ENCODE measurements at regions of chr1 and their contacts with region 1.

Region 1: DNA sequence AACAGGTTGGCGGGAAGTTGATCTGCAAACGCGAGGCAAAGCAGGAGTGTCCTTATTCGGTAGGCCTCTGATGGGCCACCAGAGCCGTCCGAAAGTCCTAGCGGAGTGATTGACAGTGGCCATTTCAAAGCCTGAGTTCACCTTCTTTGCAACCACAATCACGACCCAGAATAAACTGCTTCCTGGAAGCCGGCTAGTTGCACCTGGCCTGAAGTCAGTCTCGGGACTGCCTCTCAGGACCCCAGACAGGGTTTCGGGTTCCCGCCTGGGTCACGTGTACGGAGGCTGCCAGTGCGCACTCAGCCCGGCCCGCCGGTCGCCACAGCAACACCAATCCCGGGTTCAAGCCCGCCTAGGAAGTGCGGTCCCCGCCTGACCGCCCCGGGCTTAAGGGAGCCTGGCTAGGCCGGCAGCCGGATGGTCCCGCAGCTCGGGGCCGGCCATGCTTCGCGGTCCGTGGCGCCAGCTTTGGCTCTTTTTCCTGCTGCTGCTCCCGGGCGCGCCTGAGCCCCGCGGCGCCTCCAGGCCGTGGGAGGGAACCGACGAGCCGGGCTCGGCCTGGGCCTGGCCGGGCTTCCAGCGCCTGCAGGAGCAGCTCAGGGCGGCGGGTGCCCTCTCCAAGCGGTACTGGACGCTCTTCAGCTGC is at the start of gene TOR3A:
- DNase-seq: peak; percentile 87
- ATAC-seq: peak; percentile 78
- H3K4me3 Mint-ChIP-seq: peak within 1 kb of the TSS; percentile 94
- H3K27ac Mint-ChIP-seq: peak within 1 kb of the TSS; percentile 94
- H3K4me1 Mint-ChIP-seq: peaks cover 24% of the 10 kb centered on the region
- H3K27me3 Mint-ChIP-seq: no peaks in the 10 kb centered on the region
- total RNA-seq, gene TOR3A: 29.4 TPM

Region 2: DNA sequence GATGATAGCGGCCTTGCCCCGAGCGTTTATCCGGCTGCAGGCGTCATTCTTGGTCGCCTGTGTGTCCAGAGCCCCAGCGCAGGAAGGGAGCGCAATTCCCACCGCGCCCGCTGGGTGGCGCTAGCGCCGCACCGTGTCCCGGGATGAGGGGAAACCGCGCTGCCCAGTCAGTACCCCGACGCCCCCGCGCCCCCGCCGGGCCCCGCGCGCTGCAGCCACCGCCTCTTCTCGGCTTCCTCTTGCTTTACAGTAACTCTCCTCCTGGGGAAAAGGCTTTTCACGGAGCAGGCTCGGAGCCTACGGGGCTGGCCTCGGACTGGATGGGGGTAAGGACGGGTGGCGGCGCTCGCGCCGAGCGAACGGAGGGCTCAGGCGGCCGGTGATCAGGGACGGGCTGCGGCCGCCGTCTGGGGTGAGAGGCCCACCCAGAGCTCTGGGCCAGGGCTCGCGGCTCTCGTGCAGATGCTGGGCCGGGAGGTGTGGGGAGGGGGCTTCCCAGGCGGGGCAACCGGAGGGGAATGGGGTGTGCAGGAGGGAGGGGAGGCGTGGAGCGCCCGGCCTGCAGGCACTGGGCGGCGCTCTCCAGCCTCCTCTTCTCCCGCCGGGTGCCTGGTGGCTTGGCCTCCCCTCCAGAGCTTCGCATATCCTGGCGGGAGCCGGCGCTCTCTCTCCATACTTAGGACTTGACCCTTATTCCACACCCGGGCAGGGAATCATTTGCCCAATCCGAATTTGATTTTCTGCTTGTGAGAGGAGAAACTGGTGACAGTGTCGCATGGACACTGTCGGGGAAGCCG is 539.1 kb before region 1 on chr1:
- CTCF ChIA-PET with region 1: no interaction called
- POLR2A ChIA-PET with region 1: no interaction called
- intact Hi-C with region 1: loop called in 1 of 2 experiments (anchors 5 kb)
- DNase-seq: peak; percentile 93
- ATAC-seq: peak; percentile 88
- H3K4me3 Mint-ChIP-seq: peak overlapping the region; percentile 84
- H3K27ac Mint-ChIP-seq: peak overlapping the region; percentile 85
- H3K4me1 Mint-ChIP-seq: peaks cover 2% of the 10 kb centered on the region
- H3K27me3 Mint-ChIP-seq: no peaks in the 10 kb centered on the region

Region 3: DNA sequence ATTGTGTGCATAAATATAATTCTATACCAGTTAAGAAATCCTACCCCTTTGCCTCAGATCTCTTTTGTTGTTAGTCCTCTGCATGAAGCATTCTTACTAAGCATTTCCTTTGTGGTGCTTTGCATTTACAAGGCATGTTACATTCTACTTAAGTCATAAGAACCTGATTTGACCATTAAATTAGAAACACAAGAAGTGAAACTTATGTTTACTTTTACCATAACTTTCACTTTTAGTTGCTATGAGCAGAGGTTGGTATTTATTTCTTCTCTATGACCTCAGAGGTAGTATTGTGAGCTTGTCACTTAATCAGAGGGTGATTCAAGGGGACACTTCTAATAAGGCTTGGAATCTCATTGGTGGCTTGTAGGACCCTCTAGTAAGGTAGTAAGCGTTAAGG is 47.1 kb before region 1 on chr1:
- CTCF ChIA-PET with region 1: interaction called, 4 read pairs
- POLR2A ChIA-PET with region 1: interaction called, 5 read pairs
- intact Hi-C with region 1: loop called (anchors 1 to 2 kb)
- DNase-seq: no peak
- ATAC-seq: peak; percentile 80
- H3K4me3 Mint-ChIP-seq: no peak overlapping the region
- H3K27ac Mint-ChIP-seq: peak overlapping the region; percentile 84
- H3K4me1 Mint-ChIP-seq: peaks cover 85% of the 10 kb centered on the region
- H3K27me3 Mint-ChIP-seq: no peaks in the 10 kb centered on the region

Region 4: GRCh38 chr1:179055937-179056336 is 25.9 kb before region 1 on chr1:
- CTCF ChIA-PET with region 1: no interaction called
- POLR2A ChIA-PET with region 1: no interaction called
- intact Hi-C with region 1: no loop called
- DNase-seq: no peak
- ATAC-seq: no peak
- H3K4me3 Mint-ChIP-seq: no peak overlapping the region
- H3K27ac Mint-ChIP-seq: no peak overlapping the region
- H3K4me1 Mint-ChIP-seq: no peaks in the 10 kb centered on the region
- H3K27me3 Mint-ChIP-seq: no peaks in the 10 kb centered on the region

Region 5: GRCh38 chr1:179190861-179191260 is 109.1 kb after region 1 on chr1:
- CTCF ChIA-PET with region 1: interaction called, 3 read pairs
- POLR2A ChIA-PET with region 1: interaction called, 4 read pairs
- intact Hi-C with region 1: loop called (anchors 2 to 5 kb)
- DNase-seq: no peak
- ATAC-seq: no peak
- H3K4me3 Mint-ChIP-seq: no peak overlapping the region
- H3K27ac Mint-ChIP-seq: peak overlapping the region; percentile 11
- H3K4me1 Mint-ChIP-seq: peaks cover 18% of the 10 kb centered on the region
- H3K27me3 Mint-ChIP-seq: no peaks in the 10 kb centered on the region

Region 6: DNA sequence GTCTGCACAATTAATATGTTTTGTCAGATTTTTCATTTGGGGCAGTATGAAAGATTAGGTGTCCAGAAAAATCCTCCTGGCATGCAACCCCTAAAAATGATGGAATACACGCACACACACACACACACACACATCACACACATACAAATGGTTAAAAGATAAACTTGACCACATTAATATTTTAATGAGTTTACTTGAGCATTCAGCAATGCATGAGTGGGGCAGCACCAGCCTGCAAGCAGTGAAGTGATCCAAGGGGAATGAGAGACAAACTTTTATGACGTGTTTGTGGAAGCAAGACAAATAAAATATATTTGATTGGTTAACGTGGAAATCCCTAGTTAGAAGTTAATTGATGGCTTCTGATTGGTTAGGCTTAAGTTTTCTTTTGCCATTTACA is 182.7 kb after region 1 on chr1:
- CTCF ChIA-PET with region 1: no interaction called
- POLR2A ChIA-PET with region 1: no interaction called
- intact Hi-C with region 1: no loop called
- DNase-seq: no peak
- ATAC-seq: no peak
- H3K4me3 Mint-ChIP-seq: no peak overlapping the region
- H3K27ac Mint-ChIP-seq: no peak overlapping the region
- H3K4me1 Mint-ChIP-seq: no peaks in the 10 kb centered on the region
- H3K27me3 Mint-ChIP-seq: no peaks in the 10 kb centered on the region

Region 7: GRCh38 chr1:179278920-179279319 is 197.1 kb after region 1 on chr1:
- CTCF ChIA-PET with region 1: no interaction called
- POLR2A ChIA-PET with region 1: no interaction called
- intact Hi-C with region 1: no loop called
- DNase-seq: no peak
- ATAC-seq: no peak
- H3K4me3 Mint-ChIP-seq: no peak overlapping the region
- H3K27ac Mint-ChIP-seq: no peak overlapping the region
- H3K4me1 Mint-ChIP-seq: no peaks in the 10 kb centered on the region
- H3K27me3 Mint-ChIP-seq: no peaks in the 10 kb centered on the region

Region 8: GRCh38 chr1:179365320-179366092 is 283.7 kb after region 1 on chr1 and contains the start of gene AXDND1:
- CTCF ChIA-PET with region 1: interaction called, 28 read pairs
- POLR2A ChIA-PET with region 1: no interaction called
- intact Hi-C with region 1: loop called (anchors 1 kb)
- DNase-seq: peak; percentile 93
- ATAC-seq: peak; percentile 95
- H3K4me3 Mint-ChIP-seq: peak within 1 kb of the TSS; percentile 94
- H3K27ac Mint-ChIP-seq: peak within 1 kb of the TSS; percentile 100
- H3K4me1 Mint-ChIP-seq: peaks cover 19% of the 10 kb centered on the region
- H3K27me3 Mint-ChIP-seq: no peaks in the 10 kb centered on the region
- total RNA-seq, gene AXDND1: 0.37 to 0.47 TPM

Region 9: DNA sequence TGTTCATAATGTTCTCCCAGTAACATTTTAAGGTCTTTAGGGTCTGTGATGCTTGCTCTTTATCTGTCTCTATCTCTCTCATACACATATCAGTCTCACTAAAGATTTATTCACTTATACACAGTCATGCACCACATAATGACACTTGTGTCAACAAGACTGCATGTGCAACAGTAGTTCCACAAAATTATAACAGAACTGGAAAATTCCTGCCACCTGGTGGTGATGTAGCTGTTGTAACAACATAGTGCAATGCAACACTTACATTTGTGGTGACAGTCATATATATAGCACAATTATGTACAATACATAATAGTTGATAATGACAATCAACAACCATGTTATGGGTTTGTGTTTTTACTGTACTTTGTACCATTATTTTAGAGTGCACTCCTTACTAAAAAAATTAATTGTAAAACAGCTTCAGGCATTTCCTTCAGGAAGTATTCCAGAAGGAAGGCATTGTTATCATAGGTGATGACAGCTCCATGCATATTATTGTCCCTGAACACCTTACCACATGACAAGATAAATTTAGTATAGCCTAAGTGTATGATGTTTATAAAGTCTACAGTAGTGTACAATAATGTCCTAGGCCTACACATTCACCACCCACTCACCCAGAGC is 517.9 kb after region 1 on chr1:
- CTCF ChIA-PET with region 1: no interaction called
- POLR2A ChIA-PET with region 1: no interaction called
- intact Hi-C with region 1: loop called in 1 of 2 experiments (anchors 10 kb)
- DNase-seq: peak; percentile 31
- ATAC-seq: no peak
- H3K4me3 Mint-ChIP-seq: no peak overlapping the region
- H3K27ac Mint-ChIP-seq: no peak overlapping the region
- H3K4me1 Mint-ChIP-seq: peaks cover 2% of the 10 kb centered on the region
- H3K27me3 Mint-ChIP-seq: peaks cover 17% of the 10 kb centered on the region

Measured in activated CD4-positive, alpha-beta T cell treated with anti-CD3 and anti-CD28 coated beads for 36 hours (primary cell).